Activated naive CD4-positive, alpha-beta T cell treated with anti-CD3 and anti-CD28 coated beads, Interleukin-2, amount 10 ng/mL, durations not matched to agents 7 days and 5 days (primary cell): ENCODE measurements at regions of chr19 and their contacts with region 1.

Region 1: DNA sequence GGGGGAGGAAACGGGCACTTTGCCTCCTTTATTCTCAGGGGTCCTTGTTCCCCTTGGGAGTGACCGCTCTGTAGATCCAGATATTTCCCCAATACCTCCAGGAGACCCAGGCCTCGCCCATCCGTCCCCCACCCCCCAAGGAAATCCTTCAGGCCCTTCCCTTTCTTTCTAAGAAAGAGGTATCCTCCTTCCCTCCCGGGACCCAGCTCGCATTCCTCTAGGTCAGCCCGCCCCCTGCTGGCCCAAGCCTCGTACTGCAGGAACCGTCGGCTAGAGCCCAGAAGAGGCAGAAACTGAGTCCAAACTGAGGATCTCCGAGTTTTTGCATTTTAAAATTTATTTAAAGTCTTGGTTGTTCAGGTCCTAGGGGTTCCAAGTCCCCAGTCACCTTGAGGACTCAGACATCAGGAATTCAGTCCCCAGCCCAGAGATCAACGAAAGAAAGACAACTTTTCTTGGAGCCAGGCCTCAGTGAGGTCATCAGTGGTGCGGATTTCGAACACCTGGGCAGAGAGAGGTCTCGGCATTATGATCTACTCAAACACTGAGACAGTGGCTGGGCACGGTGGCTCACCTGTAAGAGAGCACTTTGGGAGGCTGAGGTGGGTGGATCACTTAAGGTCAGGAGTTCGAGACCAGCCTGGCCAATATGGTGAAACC is 7.5 kb upstream of the LRFN1 start:
- DNase-seq: peak; percentile 86
- H3K4me3 Mint-ChIP-seq: no peak overlapping the region
- H3K27ac Mint-ChIP-seq: peak overlapping the region; percentile 66
- H3K4me1 Mint-ChIP-seq: peaks cover 45% of the 10 kb centered on the region
- H3K27me3 Mint-ChIP-seq: no peaks in the 10 kb centered on the region

Region 2: GRCh38 chr19:39122934-39123731 is 205.0 kb before region 1 on chr19:
- CTCF ChIA-PET with region 1: interaction called, 15 read pairs
- DNase-seq: no peak
- H3K4me3 Mint-ChIP-seq: no peak overlapping the region
- H3K27ac Mint-ChIP-seq: no peak overlapping the region
- H3K4me1 Mint-ChIP-seq: peaks cover 45% of the 10 kb centered on the region
- H3K27me3 Mint-ChIP-seq: peaks cover 17% of the 10 kb centered on the region